Ovary (tissue), 10 donors: ENCODE measurements at regions of chr4 and their contacts with region 1.

Region 1: GRCh38 chr4:13461191-13461905 is 22.8 kb downstream of the RAB28 start:
- DNase-seq: no peak
- H3K4me3 ChIP-seq: no peak overlapping the region
- H3K27ac ChIP-seq: no peak overlapping the region
- H3K4me1 ChIP-seq: no peaks in the 10 kb centered on the region
- H3K27me3 ChIP-seq: no peaks in the 10 kb centered on the region
- CTCF ChIP-seq: no peak
- EP300 ChIP-seq: no peak
- POLR2A ChIP-seq: no peak

Region 2: DNA sequence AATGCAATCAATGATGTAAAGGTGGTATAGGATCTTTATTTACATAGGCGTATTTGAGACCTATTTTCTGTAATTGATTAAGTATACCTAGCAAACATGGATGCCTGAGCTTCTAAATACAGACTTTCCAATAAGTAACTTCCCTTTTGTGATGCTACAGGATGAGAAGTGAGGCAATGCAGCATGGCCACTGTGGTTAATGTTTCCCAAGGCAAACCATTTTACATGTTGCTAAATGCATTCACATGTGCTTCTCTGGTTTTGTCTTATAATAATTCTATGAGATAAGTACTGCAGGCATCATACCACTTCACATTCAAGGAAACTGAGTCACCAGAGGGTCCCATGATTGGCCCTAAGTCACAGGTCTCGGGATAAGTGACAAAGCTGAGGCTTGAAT is 118.7 kb after region 1 on chr4:
- intact Hi-C with region 1: no loop called
- DNase-seq: no peak
- H3K4me3 ChIP-seq: no peak overlapping the region
- H3K27ac ChIP-seq: no peak overlapping the region
- H3K4me1 ChIP-seq: peaks cover 9% of the 10 kb centered on the region
- H3K27me3 ChIP-seq: no peaks in the 10 kb centered on the region
- CTCF ChIP-seq: no peak
- EP300 ChIP-seq: no peak
- POLR2A ChIP-seq: no peak

Region 3: GRCh38 chr4:14383652-14384051 is 922.3 kb after region 1 on chr4:
- intact Hi-C with region 1: loop called in 1 of 4 experiments (anchors 10 kb)
- DNase-seq: no peak
- H3K4me3 ChIP-seq: no peak overlapping the region
- H3K27ac ChIP-seq: no peak overlapping the region
- H3K4me1 ChIP-seq: no peaks in the 10 kb centered on the region
- H3K27me3 ChIP-seq: no peaks in the 10 kb centered on the region
- CTCF ChIP-seq: no peak
- EP300 ChIP-seq: no peak
- POLR2A ChIP-seq: no peak

Region 4: DNA sequence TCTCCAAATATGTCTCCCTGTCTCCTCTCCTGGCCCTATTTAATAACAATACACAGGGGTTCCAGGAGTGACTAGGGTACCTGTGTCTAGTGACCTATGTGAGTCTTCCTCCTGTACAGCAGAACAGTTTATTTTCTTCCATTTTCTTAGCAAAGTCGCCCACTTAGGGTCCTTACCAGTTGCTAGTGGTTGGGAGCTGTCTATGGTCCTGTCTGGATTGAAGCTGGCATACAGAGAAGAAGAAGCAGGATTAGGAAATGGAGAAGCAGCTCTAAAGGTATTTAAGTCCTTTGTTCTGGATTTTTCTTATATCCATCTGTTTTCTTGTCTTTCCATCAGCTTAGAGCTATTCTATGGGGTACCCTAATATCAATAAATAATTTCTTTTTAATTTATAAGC is 953.8 kb after region 1 on chr4:
- intact Hi-C with region 1: no loop called
- DNase-seq: no peak
- H3K4me3 ChIP-seq: no peak overlapping the region
- H3K27ac ChIP-seq: no peak overlapping the region
- H3K4me1 ChIP-seq: no peaks in the 10 kb centered on the region
- H3K27me3 ChIP-seq: no peaks in the 10 kb centered on the region
- CTCF ChIP-seq: no peak
- EP300 ChIP-seq: no peak
- POLR2A ChIP-seq: no peak